ENCODE measurements at regions of chr10 and their contacts with region 1.

Region 1: DNA sequence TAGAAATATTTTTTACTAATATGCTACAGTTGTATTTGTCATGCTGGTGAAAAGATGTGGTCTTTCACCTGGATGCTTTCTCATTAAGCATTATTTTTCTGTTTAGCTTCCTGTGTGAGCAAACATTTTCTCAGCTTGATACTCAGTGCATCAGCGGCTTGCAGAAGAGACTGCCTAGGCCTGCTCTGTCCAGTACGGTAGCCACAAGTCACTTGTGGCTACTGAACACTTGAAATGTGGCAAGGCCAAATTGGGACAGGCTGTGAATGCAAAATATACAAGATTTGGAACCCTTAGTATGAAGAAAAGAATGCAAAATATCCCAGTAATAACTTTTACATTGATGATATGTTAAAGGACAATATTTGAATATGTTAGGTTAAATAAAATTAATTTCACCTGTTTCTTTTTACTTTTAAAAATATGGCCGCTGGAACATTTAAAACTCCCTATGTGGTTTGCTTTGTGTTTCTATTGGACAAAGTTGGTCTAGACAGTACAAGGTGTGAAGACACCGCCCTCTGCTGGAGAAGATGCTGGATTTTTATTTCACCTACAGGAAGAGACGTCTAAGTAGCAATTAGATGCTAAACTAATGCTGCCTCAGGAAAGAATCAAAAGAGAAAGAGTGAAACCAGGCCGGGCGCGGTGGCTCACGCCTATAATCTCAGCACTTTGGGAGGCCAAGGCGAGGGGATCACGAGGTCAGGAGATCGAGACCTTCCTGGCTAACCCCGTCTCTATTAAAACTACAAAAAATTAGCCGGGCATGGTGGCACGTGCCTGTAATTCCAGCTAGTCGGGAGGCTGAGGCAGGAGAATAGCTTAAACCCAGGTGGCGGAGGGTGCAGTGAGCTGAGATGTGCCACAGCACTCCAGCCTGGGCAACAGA is 5.3 kb downstream of the SRGN start:
- DNase-seq: peak; percentile 73 to 77
- H3K4me3 ChIP-seq: no peak overlapping the region
- H3K27ac ChIP-seq: no peak overlapping the region
- H3K4me1 ChIP-seq: peaks cover 7% of the 10 kb centered on the region; the same call in 1 of the 2 replicates
- H3K27me3 ChIP-seq: no peaks in the 10 kb centered on the region
- CTCF ChIP-seq: peak; percentile 94

Region 2: GRCh38 chr10:68792115-68792514 is 301.1 kb before region 1 on chr10:
- CTCF ChIA-PET with region 1: no interaction called
- POLR2A ChIA-PET with region 1: no interaction called
- intact Hi-C with region 1: loop called (anchors 1 kb)
- DNase-seq: no peak
- H3K4me3 ChIP-seq: no peak overlapping the region
- H3K27ac ChIP-seq: no peak overlapping the region
- H3K4me1 ChIP-seq: no peaks in the 10 kb centered on the region
- H3K27me3 ChIP-seq: no peaks in the 10 kb centered on the region
- CTCF ChIP-seq: peak; percentile 73

Region 3: DNA sequence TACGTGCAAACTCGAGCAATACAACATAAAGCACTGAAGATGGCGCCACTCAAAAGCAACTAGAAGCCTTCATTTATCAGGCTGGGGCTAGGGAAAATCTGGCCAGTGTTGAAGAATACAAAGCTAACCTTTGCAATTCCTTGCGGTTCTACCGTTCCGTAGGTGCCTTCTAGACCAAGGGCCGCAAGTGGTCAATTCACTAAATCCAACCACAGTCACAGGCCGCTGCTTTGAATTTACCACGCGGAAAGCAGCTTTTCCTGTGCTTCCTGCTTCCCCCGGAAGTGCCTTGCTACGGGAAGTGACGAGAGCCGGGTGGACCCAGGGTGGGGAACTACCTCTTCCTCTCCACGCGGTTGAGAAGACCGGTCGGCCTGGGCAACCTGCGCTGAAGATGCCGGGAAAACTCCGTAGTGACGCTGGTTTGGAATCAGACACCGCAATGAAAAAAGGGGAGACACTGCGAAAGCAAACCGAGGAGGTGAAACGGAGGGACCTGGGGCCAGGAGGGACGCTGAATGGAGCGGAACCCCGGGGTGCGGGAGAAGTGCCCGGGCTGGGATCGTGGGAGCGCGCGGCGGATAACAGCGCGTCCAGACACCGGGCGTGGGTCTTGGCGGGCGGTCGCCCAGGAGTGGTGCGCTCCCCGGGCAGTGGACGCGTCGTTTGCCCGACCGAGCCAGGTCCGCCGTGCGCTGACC is 137.2 kb before region 1 on chr10 and contains the start of gene DDX21:
- CTCF ChIA-PET with region 1: interaction called, 3 read pairs
- POLR2A ChIA-PET with region 1: no interaction called
- intact Hi-C with region 1: loop called (anchors 1 kb)
- DNase-seq: peak; percentile 88 to 92
- H3K4me3 ChIP-seq: peak within 1 kb of the TSS; percentile 85
- H3K27ac ChIP-seq: peak within 1 kb of the TSS; percentile 86
- H3K4me1 ChIP-seq: peaks cover 29% of the 10 kb centered on the region
- H3K27me3 ChIP-seq: no peaks in the 10 kb centered on the region
- CTCF ChIP-seq: peak; percentile 81
- total RNA-seq, gene DDX21: 65.8 and 88.0 TPM in 2 replicates

Region 4: GRCh38 chr10:69004821-69005220 is 88.4 kb before region 1 on chr10:
- CTCF ChIA-PET with region 1: interaction called, 19 read pairs
- POLR2A ChIA-PET with region 1: no interaction called
- intact Hi-C with region 1: loop called (anchors 1 kb)
- DNase-seq: peak in 1 of 2 experiments; percentile 56
- H3K4me3 ChIP-seq: no peak overlapping the region
- H3K27ac ChIP-seq: no peak overlapping the region
- H3K4me1 ChIP-seq: no peaks in the 10 kb centered on the region
- H3K27me3 ChIP-seq: no peaks in the 10 kb centered on the region
- CTCF ChIP-seq: peak; percentile 84

Region 5: GRCh38 chr10:69073026-69073425 is 20.2 kb before region 1 on chr10:
- CTCF ChIA-PET with region 1: interaction called, 16 read pairs
- POLR2A ChIA-PET with region 1: no interaction called
- intact Hi-C with region 1: no loop called
- DNase-seq: no peak
- H3K4me3 ChIP-seq: no peak overlapping the region
- H3K27ac ChIP-seq: no peak overlapping the region
- H3K4me1 ChIP-seq: no peaks in the 10 kb centered on the region
- H3K27me3 ChIP-seq: no peaks in the 10 kb centered on the region
- CTCF ChIP-seq: no peak

Region 6: DNA sequence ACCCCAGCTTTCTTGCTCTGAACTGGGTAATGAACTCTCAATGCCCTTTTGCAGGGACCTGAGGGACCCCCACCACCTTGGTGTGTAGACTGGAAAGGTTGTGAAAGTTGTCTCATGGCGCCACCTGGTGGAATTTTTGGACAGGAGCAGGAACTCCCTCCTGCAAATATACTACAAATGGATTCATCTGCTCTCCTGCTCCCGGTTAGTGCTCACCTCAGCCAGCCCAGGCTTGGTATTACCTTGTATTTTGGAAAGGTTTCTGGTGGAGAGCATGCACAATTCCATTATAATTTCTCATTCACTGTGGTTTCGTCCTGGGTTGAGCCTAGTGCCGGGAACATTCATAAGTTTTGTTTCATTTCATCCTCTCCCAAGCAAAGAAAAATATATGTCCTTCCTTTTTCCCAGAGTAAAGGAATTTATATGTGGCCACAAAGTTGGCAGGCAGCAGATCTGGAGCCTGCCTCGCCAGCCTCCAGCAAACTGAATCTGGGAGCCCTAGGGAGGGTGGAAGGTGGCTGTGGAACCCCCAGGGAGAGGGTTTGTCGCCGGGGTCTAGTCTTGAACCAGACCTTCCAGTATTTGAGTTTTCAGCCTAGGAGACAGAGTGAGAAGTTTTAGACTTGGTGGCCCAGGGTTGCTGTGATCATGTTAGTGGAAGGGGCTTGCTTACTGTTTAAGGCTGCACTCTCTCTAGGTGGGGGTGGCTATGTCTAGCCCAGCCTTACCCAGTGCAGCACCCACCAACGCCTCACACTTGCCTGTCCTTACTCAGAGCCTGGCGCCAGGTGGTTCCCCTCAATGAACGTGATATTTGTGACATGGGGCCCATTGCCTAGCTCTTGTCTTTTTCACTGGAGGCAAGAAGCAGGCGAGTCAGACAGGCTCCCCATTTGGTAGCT is 546.3 kb after region 1 on chr10:
- CTCF ChIA-PET with region 1: interaction called, 3 read pairs
- POLR2A ChIA-PET with region 1: no interaction called
- intact Hi-C with region 1: loop called (anchors 5 kb)
- DNase-seq: peak; percentile 46 to 62
- H3K4me3 ChIP-seq: no peak overlapping the region
- H3K27ac ChIP-seq: no peak overlapping the region
- H3K4me1 ChIP-seq: peaks cover 10% of the 10 kb centered on the region
- H3K27me3 ChIP-seq: peaks cover 14% of the 10 kb centered on the region; the same call in 1 of the 2 replicates
- CTCF ChIP-seq: peak; percentile 98

Region 7: DNA sequence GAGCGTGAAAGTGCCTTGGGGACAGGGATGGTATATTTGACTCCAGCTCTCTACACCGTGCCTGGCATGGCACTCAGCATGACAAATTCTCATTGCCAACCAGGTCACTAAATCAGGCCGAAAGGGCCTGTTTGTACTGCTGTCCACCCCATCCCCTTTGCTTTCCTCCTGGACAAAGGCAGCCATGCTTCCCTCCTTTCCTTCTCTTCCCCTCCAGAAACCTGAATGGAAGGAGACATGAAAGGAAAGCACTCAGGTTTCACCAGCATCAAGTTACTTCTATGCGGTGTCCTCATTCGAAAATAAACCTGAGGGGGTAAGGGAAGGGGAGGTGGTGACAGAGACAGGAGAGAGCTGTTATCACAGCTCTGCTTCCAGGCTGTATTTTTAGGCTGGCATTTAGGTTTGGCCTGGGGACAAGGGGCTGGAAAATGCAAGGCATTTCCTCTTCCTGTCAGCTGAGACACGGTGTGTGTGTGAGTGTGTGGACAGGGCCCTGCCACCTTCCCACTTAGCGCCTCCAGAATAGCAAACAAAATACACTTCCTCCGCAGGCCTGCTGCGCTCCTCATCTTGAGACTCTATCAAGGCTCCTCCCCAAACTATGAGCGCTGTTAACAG is 628.6 kb after region 1 on chr10:
- CTCF ChIA-PET with region 1: no interaction called
- POLR2A ChIA-PET with region 1: no interaction called
- intact Hi-C with region 1: no loop called
- DNase-seq: no peak
- H3K4me3 ChIP-seq: no peak overlapping the region
- H3K27ac ChIP-seq: no peak overlapping the region
- H3K4me1 ChIP-seq: no peaks in the 10 kb centered on the region
- H3K27me3 ChIP-seq: peaks cover 31% of the 10 kb centered on the region; the same call in 1 of the 2 replicates
- CTCF ChIP-seq: no peak

Measured in PC-9 (cell line).